Psoas muscle (tissue), 8 donors: ENCODE measurements at regions of chr1 and their contacts with region 1.

Region 1: DNA sequence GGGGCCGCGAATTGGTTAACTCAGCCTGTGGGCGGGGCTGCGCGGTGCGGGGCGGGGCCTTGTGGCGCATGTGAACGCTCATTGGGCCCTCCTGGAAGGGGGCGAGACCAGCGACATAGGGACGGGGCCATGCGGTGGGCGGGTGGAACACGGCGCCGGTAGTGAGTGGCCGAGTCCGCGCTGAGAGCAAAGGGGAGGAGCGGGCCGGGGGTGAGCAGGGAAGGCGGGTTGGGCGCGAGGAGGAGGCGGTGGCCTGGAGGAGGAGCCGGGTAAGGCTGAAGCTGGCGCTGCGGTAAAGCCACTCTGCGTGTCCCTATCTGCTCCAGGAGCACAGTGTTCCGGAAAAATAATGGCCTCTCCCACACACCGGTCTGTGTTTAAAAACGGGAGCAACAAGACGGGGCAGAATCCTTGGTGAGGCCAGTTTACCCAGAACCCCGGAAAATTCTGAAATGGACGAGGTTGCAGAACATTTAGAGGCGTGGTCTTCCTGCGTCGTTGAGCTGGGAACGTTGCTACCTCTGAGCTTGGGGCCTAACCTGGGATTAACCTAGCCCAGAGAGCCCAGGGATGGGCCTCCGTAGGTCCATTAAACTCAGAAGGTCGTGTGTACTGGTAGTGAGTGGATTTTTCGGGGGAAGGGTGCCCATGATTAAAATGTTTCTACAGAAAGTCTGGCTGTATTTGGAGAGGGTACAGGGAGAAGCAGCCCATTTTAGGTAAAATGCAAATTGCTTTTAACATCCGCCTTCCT is 533 bp upstream of the CTNNBIP1 start:
- DNase-seq: peak; percentile 100
- ATAC-seq: peak; percentile 96 to 98 (median 98)
- H3K4me3 ChIP-seq: peak overlapping the region; percentile 63
- H3K27ac ChIP-seq: peak overlapping the region; percentile 78
- H3K4me1 ChIP-seq: peaks cover 13% of the 10 kb centered on the region
- H3K27me3 ChIP-seq: no peaks in the 10 kb centered on the region
- CTCF ChIP-seq: no peak

Region 2: GRCh38 chr1:9689011-9689706 is 221.4 kb before region 1 on chr1:
- intact Hi-C with region 1: no loop called
- DNase-seq: peak; percentile 80 to 87
- ATAC-seq: peak; percentile 83 to 91 (median 86)
- H3K4me3 ChIP-seq: peak overlapping the region; percentile 73
- H3K27ac ChIP-seq: no peak overlapping the region
- H3K4me1 ChIP-seq: peaks cover 20% of the 10 kb centered on the region
- H3K27me3 ChIP-seq: peaks cover 0 to 19% (median 6%) of the 10 kb centered on the region in 3 donors
- CTCF ChIP-seq: no peak

Region 3: GRCh38 chr1:9792156-9793042 is 118.2 kb before region 1 on chr1:
- intact Hi-C with region 1: no loop called
- DNase-seq: peak in 1 of 2 donors; percentile 73
- ATAC-seq: peak; percentile 83 to 93 (median 92)
- H3K4me3 ChIP-seq: peak overlapping the region; percentile 5
- H3K27ac ChIP-seq: peak overlapping the region; percentile 50
- H3K4me1 ChIP-seq: peaks cover 27% of the 10 kb centered on the region
- H3K27me3 ChIP-seq: no peaks in the 10 kb centered on the region
- CTCF ChIP-seq: peak; percentile 27

Region 4: DNA sequence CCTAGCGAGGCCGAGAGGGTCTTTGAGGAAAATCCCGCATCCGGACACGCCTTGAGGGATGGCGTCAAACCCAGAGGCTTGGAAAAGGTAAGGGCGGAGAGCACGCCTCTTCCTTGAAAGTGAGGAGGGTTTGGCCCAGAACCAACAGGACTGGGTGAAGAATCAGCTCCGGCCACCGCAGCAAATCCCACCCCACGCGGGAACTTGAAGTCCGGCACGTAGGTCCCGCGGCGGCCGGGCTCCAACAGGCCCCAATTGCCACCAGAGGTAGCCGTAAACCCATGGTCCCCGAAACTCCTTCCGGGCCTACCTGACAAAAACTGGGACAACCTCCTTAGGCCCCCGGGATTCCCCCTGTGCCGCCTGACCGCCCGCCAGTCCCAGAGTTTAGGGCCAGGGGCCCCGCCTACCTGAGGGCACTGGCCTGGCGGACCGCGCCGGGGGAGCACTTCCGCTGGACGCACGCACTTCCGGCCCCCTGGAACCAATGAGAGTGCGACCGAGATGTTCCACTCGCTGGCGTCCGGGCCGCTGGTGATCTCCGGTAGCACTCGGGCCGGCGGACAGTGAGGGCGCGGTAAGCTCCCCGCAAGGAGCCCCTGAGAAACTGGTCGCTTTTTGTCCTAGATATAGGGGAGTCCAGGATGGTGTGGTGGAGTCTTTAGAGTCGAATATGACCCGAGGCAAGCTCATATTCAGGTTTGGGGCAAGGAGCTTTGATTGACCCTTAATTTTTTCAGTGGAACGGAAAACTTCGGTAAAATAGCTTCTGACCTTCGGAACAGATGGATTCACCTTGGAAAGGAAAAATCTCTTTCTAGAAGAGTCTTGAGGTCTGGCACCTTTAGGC is 32.6 kb after region 1 on chr1 and contains the starts of genes LZIC and NMNAT1:
- intact Hi-C with region 1: loop called in 1 of 2 experiments (anchors 2 kb)
- DNase-seq: peak; percentile 93 to 96
- ATAC-seq: peak; percentile 98 to 100 (median 99)
- H3K4me3 ChIP-seq: peak within 1 kb of the TSS; percentile 91
- H3K27ac ChIP-seq: peak within 1 kb of the TSS; percentile 91
- H3K4me1 ChIP-seq: peaks cover 31% of the 10 kb centered on the region
- H3K27me3 ChIP-seq: no peaks in the 10 kb centered on the region
- CTCF ChIP-seq: no peak
- total RNA-seq, gene LZIC: 17.6 to 24.9 (median 21.1) TPM
- total RNA-seq, gene NMNAT1: 8.0 to 18.2 (median 14.0) TPM